ENCODE measurements at regions of chr15 and their contacts with region 1.

Region 1: GRCh38 chr15:87604857-87605446 is 651.6 kb downstream of the NTRK3 start:
- DNase-seq: peak; percentile 17
- H3K4me3 ChIP-seq: no peak overlapping the region
- H3K27ac ChIP-seq: no peak overlapping the region
- H3K4me1 ChIP-seq: peaks cover 17% of the 10 kb centered on the region
- H3K27me3 ChIP-seq: no peaks in the 10 kb centered on the region
- CTCF ChIP-seq: peak; percentile 74 to 81

Region 2: DNA sequence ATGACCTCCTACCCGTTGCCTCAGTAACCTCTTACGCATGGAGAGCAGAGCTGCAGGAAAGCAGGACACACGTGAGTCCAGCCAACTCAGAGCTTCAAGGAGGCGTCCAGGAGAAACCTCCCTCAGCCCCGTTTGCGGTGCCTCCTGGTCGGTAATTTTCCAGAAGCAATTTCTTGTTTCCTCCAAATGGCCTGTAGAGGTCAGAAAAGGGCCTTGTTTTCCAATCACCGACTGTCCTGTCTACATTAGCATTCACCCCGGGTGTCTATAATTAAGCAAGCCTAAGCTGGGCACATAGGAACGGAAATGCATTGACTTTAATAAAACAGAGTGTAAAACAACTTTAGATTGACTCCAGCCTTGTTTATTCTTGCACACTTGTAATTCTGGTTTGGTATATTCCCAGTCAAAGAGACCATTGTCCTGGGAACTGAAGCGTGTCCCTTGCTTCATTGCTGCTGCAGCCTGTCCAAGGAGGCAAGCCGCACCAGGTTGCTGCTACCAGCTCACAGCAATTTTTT is 689.1 kb before region 1 on chr15:
- CTCF ChIA-PET with region 1: no interaction called
- dilution Hi-C with region 1: no loop called
- in situ Hi-C with region 1: no loop called
- intact Hi-C with region 1: loop called (anchors 5 kb)
- DNase-seq: peak; percentile 65
- H3K4me3 ChIP-seq: no peak overlapping the region
- H3K27ac ChIP-seq: no peak overlapping the region
- H3K4me1 ChIP-seq: peaks cover 9% of the 10 kb centered on the region
- H3K27me3 ChIP-seq: no peaks in the 10 kb centered on the region
- CTCF ChIP-seq: peak; percentile 43 to 67

Region 3: GRCh38 chr15:87038404-87038803 is 566.5 kb before region 1 on chr15:
- CTCF ChIA-PET with region 1: no interaction called
- dilution Hi-C with region 1: no loop called
- in situ Hi-C with region 1: no loop called
- intact Hi-C with region 1: loop called (anchors 1 kb)
- DNase-seq: no peak
- H3K4me3 ChIP-seq: no peak overlapping the region
- H3K27ac ChIP-seq: no peak overlapping the region
- H3K4me1 ChIP-seq: peaks cover 6% of the 10 kb centered on the region
- H3K27me3 ChIP-seq: no peaks in the 10 kb centered on the region
- CTCF ChIP-seq: no peak

Region 4: DNA sequence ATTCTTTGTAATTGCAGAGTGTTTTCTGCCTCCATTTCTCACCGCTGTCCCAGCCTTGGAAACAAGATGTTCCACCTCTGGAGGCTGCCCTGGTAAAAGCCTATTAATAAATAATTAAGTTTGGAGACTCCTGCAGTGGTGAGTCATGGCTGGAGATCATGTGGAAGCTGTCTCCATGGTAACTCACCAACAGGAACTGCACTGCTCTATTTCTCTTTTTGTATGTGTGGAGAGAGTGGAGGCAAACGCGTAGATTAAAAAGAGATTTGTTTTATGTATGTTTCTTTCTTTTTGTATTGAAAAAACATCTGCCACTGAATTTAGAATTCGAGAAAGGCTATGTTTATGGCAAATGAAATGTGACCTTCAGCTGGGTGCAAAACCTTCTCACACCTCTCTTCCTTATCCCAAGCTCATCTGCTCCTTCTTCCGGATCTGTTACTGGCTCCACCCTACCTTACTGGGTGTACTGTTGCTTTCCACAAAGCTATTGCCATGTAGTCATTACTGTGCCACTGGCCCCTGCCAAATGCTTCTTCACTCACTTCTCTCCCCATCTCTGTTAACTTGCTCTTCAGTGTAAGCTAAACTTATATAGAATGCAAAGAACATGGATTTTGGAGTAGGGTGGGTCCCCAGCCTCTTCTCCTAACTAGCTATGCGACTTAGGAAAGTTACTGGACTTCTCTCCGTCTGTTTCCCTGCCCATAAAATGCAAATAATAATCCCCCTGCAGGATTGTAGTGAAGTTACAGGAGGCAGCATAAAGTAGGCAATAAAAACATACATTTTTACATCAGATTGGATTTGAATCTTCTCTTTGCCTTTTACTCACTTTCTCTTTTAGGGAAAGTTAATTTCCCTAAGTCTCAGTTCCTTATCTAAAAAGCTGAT is 126.9 kb before region 1 on chr15:
- CTCF ChIA-PET with region 1: interaction called, 6 read pairs
- dilution Hi-C with region 1: no loop called
- in situ Hi-C with region 1: no loop called
- intact Hi-C with region 1: loop called (anchors 5 kb)
- DNase-seq: peak; percentile 85
- H3K4me3 ChIP-seq: no peak overlapping the region
- H3K27ac ChIP-seq: peak overlapping the region; percentile 71
- H3K4me1 ChIP-seq: peaks cover 9% of the 10 kb centered on the region
- H3K27me3 ChIP-seq: no peaks in the 10 kb centered on the region
- CTCF ChIP-seq: peak; percentile 19 to 20